Right lobe of liver (tissue), 6 donors: ENCODE measurements at regions of chr1 and their contacts with region 1.

Region 1: GRCh38 chr1:159141584-159142390 is 29.6 kb upstream of the CADM3 start:
- DNase-seq: no peak
- ATAC-seq: no peak
- H3K4me3 ChIP-seq: no peak overlapping the region
- H3K27ac ChIP-seq: no peak overlapping the region
- H3K4me1 ChIP-seq: no peaks in the 10 kb centered on the region
- H3K27me3 ChIP-seq: no peaks in the 10 kb centered on the region
- CTCF ChIP-seq: no peak
- POLR2A ChIP-seq: no peak

Region 2: DNA sequence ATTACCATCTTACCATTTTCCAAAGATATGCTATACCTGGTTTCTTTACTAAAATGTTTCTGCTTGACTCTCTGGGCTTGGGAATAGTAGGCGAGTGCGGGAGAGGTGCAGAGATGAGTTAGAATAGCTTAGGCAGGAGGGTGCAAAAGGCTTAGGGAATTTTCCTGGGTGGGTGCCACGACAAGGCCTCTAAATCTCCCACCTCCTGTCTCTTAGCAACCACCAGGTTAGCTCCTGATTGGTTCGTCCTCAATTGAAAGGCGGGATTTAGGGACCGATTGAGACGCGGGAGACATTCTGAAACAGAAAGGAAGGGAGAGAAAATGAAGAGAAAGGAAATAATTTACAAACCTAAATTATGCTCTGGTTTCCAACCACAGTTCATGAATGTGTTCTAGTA is 66.0 kb after region 1 on chr1:
- intact Hi-C with region 1: loop called in 1 of 2 experiments (anchors 10 kb)
- DNase-seq: no peak
- ATAC-seq: no peak
- H3K4me3 ChIP-seq: no peak overlapping the region
- H3K27ac ChIP-seq: no peak overlapping the region
- H3K4me1 ChIP-seq: no peaks in the 10 kb centered on the region
- H3K27me3 ChIP-seq: no peaks in the 10 kb centered on the region
- CTCF ChIP-seq: no peak
- POLR2A ChIP-seq: no peak